Naive thymus-derived CD4-positive, alpha-beta T cell (primary cell): ENCODE measurements at regions of chr1 and their contacts with region 1.

Region 1: GRCh38 chr1:185317034-185317885 is at the start of gene IVNS1ABP:
- DNase-seq: peak; percentile 91 to 97 (median 95)
- ATAC-seq: peak; percentile 88
- H3K4me3 ChIP-seq: peak within 1 kb of the TSS; percentile 95
- H3K4me3 Mint-ChIP-seq: peak within 1 kb of the TSS; percentile 92 to 100 (median 98)
- H3K27ac ChIP-seq: peak within 1 kb of the TSS; percentile 99
- H3K27ac Mint-ChIP-seq: peak within 1 kb of the TSS; percentile 96 to 99 (median 99)
- H3K4me1 ChIP-seq: peaks cover 31 to 42% of the 10 kb centered on the region in 2 donors
- H3K4me1 Mint-ChIP-seq: peaks cover 39 to 55% (median 46%) of the 10 kb centered on the region in 7 donors
- H3K27me3 ChIP-seq: no peaks in the 10 kb centered on the region
- H3K27me3 Mint-ChIP-seq: peaks cover 0 to 2% (median 0%) of the 10 kb centered on the region in 5 donors
- total RNA-seq, gene IVNS1ABP: 169 to 268 (median 193) TPM

Region 2: DNA sequence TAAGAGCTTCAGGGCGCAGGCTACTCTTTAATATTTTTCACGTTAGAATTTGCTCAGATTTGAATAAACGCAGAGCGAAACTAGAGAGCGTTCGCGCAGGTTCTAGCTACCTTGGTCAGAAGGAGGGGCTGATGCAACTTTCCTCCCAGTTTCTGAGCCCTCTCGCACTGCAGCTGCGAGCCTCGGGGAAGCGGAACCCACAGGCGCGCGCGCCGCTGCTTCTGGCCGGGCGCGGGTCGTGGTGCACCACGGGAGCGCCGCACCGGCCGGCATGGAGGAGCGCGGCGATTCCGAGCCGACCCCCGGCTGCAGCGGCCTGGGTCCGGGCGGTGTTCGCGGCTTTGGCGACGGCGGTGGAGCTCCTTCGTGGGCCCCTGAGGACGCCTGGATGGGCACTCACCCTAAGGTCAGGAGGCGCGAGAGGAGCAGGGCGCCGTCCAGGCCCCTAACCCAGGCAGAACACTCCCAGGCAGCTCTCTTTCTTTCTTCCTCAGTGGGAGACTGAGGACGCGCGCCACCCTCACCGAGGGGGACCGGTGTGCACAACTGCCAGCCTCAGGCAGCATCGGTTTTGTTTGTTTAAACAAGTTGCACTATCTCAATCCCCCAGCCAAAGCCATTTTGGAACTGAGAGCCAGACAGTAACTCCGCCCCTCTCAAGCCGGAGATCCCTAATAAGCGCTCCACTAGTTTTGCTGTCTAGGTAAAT is 1265.6 kb before region 1 on chr1 and contains the start of gene TSEN15:
- CTCF ChIA-PET with region 1: no interaction called
- POLR2A ChIA-PET with region 1: no interaction called
- intact Hi-C with region 1: loop called (anchors 1 to 10 kb)
- DNase-seq: peak; percentile 54 to 75 (median 68)
- ATAC-seq: peak; percentile 98
- H3K4me3 ChIP-seq: peak within 1 kb of the TSS; percentile 87
- H3K4me3 Mint-ChIP-seq: peak within 1 kb of the TSS; percentile 91 to 99 (median 98)
- H3K27ac ChIP-seq: peak within 1 kb of the TSS; percentile 77
- H3K27ac Mint-ChIP-seq: peak within 1 kb of the TSS; percentile 89 to 99 (median 95)
- H3K4me1 ChIP-seq: peaks cover 19 to 23% of the 10 kb centered on the region in 2 donors
- H3K4me1 Mint-ChIP-seq: peaks cover 18 to 56% (median 45%) of the 10 kb centered on the region in 7 donors
- H3K27me3 ChIP-seq: peaks cover 0 to 3% of the 10 kb centered on the region in 2 donors
- H3K27me3 Mint-ChIP-seq: peaks cover 13 to 33% (median 20%) of the 10 kb centered on the region in 5 donors
- total RNA-seq, gene TSEN15: 12.7 to 48.9 (median 31.1) TPM

Region 3: DNA sequence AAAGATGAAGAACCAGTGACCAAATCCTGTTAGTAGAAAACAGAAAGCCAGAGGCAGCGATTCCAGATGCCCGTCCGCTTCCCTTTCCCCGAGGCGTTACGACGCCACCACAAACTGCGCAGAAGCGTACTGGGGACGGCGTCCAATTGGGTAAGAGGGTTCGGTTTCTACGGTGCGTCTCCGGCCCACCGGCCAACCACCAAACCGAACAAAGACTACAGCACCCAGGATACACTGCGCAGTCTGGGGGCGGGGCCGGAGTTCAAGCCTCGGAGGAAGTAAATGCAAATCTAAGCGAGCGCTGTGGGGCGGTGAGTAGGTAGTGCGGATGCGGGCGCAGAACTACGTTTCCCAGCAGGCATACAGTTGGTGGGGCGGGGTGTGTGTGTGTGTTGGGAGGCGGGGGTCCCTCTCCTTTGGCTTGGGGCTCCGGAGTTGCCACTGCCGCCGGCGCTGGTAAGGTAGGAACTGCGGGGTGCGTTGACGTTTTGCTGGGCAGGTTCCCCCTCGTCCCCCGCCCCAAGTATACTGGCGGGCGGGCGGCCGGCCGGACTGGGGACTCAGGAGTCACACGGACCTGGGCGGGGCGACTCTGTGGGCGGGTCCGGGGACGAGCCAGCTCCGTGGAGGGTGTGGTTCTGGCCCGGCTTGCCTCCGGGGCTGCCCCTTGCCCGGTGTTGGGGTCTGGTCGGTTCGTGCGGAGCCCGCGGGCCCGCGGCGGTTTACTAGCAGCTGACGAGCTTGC is 160.2 kb before region 1 on chr1 and contains the starts of genes SWT1 and TRMT1L:
- CTCF ChIA-PET with region 1: no interaction called
- POLR2A ChIA-PET with region 1: interaction called, 33 read pairs
- intact Hi-C with region 1: loop called (anchors 1 kb)
- DNase-seq: peak; percentile 91 to 97 (median 96)
- ATAC-seq: peak; percentile 95
- H3K4me3 ChIP-seq: peak within 1 kb of the TSS; percentile 88
- H3K4me3 Mint-ChIP-seq: peak within 1 kb of the TSS; percentile 97 to 100 (median 98)
- H3K27ac ChIP-seq: peak within 1 kb of the TSS; percentile 97
- H3K27ac Mint-ChIP-seq: peak within 1 kb of the TSS; percentile 96 to 100 (median 98)
- H3K4me1 ChIP-seq: peaks cover 9 to 20% of the 10 kb centered on the region in 2 donors
- H3K4me1 Mint-ChIP-seq: peaks cover 28 to 67% (median 56%) of the 10 kb centered on the region in 7 donors
- H3K27me3 ChIP-seq: no peaks in the 10 kb centered on the region
- H3K27me3 Mint-ChIP-seq: no peaks in the 10 kb centered on the region
- total RNA-seq, gene SWT1: 4.4 to 11.5 (median 5.2) TPM
- total RNA-seq, gene TRMT1L: 11.6 to 33.9 (median 27.3) TPM

Region 4: GRCh38 chr1:185328255-185328654 is 11.0 kb after region 1 on chr1:
- CTCF ChIA-PET with region 1: interaction called, 5 read pairs
- POLR2A ChIA-PET with region 1: interaction called, 4 read pairs
- intact Hi-C with region 1: loop called in 1 of 2 experiments (anchors 1 kb)
- DNase-seq: no peak
- ATAC-seq: no peak
- H3K4me3 ChIP-seq: no peak overlapping the region
- H3K4me3 Mint-ChIP-seq: no peak overlapping the region
- H3K27ac ChIP-seq: no peak overlapping the region
- H3K27ac Mint-ChIP-seq: no peak overlapping the region
- H3K4me1 ChIP-seq: no peaks in the 10 kb centered on the region
- H3K4me1 Mint-ChIP-seq: peaks cover 0 to 4% (median 0%) of the 10 kb centered on the region in 7 donors
- H3K27me3 ChIP-seq: no peaks in the 10 kb centered on the region
- H3K27me3 Mint-ChIP-seq: no peaks in the 10 kb centered on the region

Region 5: DNA sequence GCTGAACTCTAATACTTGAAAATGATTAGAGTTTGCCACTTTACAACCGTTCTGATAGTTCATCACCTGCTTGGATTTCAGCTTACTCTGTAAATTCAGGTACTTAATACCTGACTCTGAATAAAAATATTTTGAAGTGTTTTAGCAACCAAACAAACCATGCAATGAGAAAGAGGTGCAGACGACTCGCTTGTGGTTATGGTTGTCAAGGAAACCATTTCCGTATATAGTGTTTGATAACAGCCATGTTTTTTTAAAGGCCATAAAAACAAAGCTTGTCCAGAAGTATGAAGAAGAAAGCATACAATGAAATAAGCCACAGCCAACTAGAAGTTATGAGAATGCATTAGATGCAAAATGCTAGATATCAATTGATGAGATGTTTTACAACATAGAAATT is 249.7 kb after region 1 on chr1:
- CTCF ChIA-PET with region 1: no interaction called
- POLR2A ChIA-PET with region 1: interaction called, 28 read pairs
- intact Hi-C with region 1: loop called (anchors 1 kb)
- DNase-seq: peak in 7 of 9 donors; percentile 85 to 94 (median 91)
- ATAC-seq: peak; percentile 92
- H3K4me3 ChIP-seq: no peak overlapping the region
- H3K4me3 Mint-ChIP-seq: peak overlapping the region; percentile 46 to 87 (median 78)
- H3K27ac ChIP-seq: peak overlapping the region; percentile 89
- H3K27ac Mint-ChIP-seq: peak overlapping the region; percentile 96 to 100 (median 98)
- H3K4me1 ChIP-seq: peaks cover 37 to 56% of the 10 kb centered on the region in 2 donors
- H3K4me1 Mint-ChIP-seq: peaks cover 47 to 91% (median 86%) of the 10 kb centered on the region in 7 donors
- H3K27me3 ChIP-seq: no peaks in the 10 kb centered on the region
- H3K27me3 Mint-ChIP-seq: no peaks in the 10 kb centered on the region

Region 6: GRCh38 chr1:185694081-185694480 is 376.8 kb after region 1 on chr1:
- CTCF ChIA-PET with region 1: interaction called, 4 read pairs
- POLR2A ChIA-PET with region 1: interaction called, 15 read pairs
- intact Hi-C with region 1: loop called in 1 of 2 experiments (anchors 1 kb)
- DNase-seq: peak in 4 of 9 donors; percentile 20 to 26 (median 22)
- ATAC-seq: peak; percentile 60
- H3K4me3 ChIP-seq: peak overlapping the region; percentile 31
- H3K4me3 Mint-ChIP-seq: peak overlapping the region; percentile 73 to 85 (median 78)
- H3K27ac ChIP-seq: peak overlapping the region; percentile 50
- H3K27ac Mint-ChIP-seq: peak overlapping the region; percentile 77 to 96 (median 88)
- H3K4me1 ChIP-seq: peaks cover 0 to 17% of the 10 kb centered on the region in 2 donors
- H3K4me1 Mint-ChIP-seq: peaks cover 11 to 27% (median 14%) of the 10 kb centered on the region in 7 donors
- H3K27me3 ChIP-seq: no peaks in the 10 kb centered on the region
- H3K27me3 Mint-ChIP-seq: peaks cover 0 to 27% (median 9%) of the 10 kb centered on the region in 5 donors